Naive thymus-derived CD4-positive, alpha-beta T cell (primary cell): ENCODE measurements at regions of chrX and their contacts with region 1.

Region 1: DNA sequence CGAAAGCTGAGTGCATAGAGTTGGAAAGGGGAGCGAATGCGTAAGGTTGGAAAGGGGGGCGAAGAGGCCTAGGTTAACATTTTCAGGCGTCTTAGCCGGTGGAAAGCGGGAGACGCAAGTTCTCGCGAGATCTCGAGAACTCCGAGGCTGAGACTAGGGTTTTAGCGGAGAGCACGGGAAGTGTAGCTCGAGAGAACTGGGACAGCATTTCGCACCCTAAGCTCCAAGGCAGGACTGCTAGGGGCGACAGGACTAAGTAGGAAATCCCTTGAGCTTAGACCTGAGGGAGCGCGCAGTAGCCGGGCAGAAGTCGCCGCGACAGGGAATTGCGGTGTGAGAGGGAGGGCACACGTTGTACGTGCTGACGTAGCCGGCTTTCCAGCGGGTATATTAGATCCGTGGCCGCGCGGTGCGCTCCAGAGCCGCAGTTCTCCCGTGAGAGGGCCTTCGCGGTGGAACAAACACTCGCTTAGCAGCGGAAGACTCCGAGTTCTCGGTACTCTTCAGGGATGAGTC is at the start of gene DDX3X:
- DNase-seq: peak; percentile 69 to 95 (median 91)
- ATAC-seq: peak; percentile 73
- H3K4me3 ChIP-seq: peak within 1 kb of the TSS; percentile 91
- H3K4me3 Mint-ChIP-seq: peak within 1 kb of the TSS; percentile 92 to 99 (median 96)
- H3K27ac ChIP-seq: peak within 1 kb of the TSS; percentile 100
- H3K27ac Mint-ChIP-seq: peak within 1 kb of the TSS; percentile 99 to 100 (median 100)
- H3K4me1 ChIP-seq: peaks cover 8 to 16% of the 10 kb centered on the region in 2 donors
- H3K4me1 Mint-ChIP-seq: peaks cover 12 to 65% (median 29%) of the 10 kb centered on the region in 7 donors
- H3K27me3 ChIP-seq: no peaks in the 10 kb centered on the region
- H3K27me3 Mint-ChIP-seq: peaks cover 0 to 6% (median 0%) of the 10 kb centered on the region in 5 donors
- total RNA-seq, gene DDX3X: 281 to 790 (median 296) TPM

Region 2: GRCh38 chrX:40097497-40098263 is 1236.1 kb before region 1 on chrX and contains the start of gene BCOR:
- CTCF ChIA-PET with region 1: no interaction called
- POLR2A ChIA-PET with region 1: no interaction called
- intact Hi-C with region 1: loop called in 1 of 2 experiments (anchors 5 kb)
- DNase-seq: peak; percentile 54 to 78 (median 72)
- ATAC-seq: peak; percentile 58
- H3K4me3 ChIP-seq: peak within 1 kb of the TSS; percentile 74
- H3K4me3 Mint-ChIP-seq: peak within 1 kb of the TSS; percentile 88 to 98 (median 92)
- H3K27ac ChIP-seq: peak within 1 kb of the TSS; percentile 80
- H3K27ac Mint-ChIP-seq: peak within 1 kb of the TSS; percentile 82 to 93 (median 89)
- H3K4me1 ChIP-seq: peaks cover 5 to 12% of the 10 kb centered on the region in 2 donors
- H3K4me1 Mint-ChIP-seq: peaks cover 12 to 34% (median 25%) of the 10 kb centered on the region in 7 donors
- H3K27me3 ChIP-seq: no peaks in the 10 kb centered on the region
- H3K27me3 Mint-ChIP-seq: no peaks in the 10 kb centered on the region
- total RNA-seq, gene BCOR: 23.3 to 55.2 (median 43.3) TPM

Region 3: GRCh38 chrX:40647307-40648197 is 686.2 kb before region 1 on chrX and contains the start of gene CXorf38:
- CTCF ChIA-PET with region 1: no interaction called
- POLR2A ChIA-PET with region 1: interaction called, 5 read pairs
- intact Hi-C with region 1: loop called (anchors 2 to 5 kb)
- DNase-seq: peak; percentile 86 to 99 (median 95)
- ATAC-seq: peak; percentile 85
- H3K4me3 ChIP-seq: peak within 1 kb of the TSS; percentile 73
- H3K4me3 Mint-ChIP-seq: peak within 1 kb of the TSS; percentile 89 to 96 (median 94)
- H3K27ac ChIP-seq: peak within 1 kb of the TSS; percentile 89
- H3K27ac Mint-ChIP-seq: peak within 1 kb of the TSS; percentile 88 to 99 (median 95)
- H3K4me1 ChIP-seq: peaks cover 3 to 19% of the 10 kb centered on the region in 2 donors
- H3K4me1 Mint-ChIP-seq: peaks cover 16 to 51% (median 31%) of the 10 kb centered on the region in 7 donors
- H3K27me3 ChIP-seq: no peaks in the 10 kb centered on the region
- H3K27me3 Mint-ChIP-seq: no peaks in the 10 kb centered on the region
- total RNA-seq, gene CXorf38: 15.0 to 25.4 (median 22.2) TPM

Region 4: DNA sequence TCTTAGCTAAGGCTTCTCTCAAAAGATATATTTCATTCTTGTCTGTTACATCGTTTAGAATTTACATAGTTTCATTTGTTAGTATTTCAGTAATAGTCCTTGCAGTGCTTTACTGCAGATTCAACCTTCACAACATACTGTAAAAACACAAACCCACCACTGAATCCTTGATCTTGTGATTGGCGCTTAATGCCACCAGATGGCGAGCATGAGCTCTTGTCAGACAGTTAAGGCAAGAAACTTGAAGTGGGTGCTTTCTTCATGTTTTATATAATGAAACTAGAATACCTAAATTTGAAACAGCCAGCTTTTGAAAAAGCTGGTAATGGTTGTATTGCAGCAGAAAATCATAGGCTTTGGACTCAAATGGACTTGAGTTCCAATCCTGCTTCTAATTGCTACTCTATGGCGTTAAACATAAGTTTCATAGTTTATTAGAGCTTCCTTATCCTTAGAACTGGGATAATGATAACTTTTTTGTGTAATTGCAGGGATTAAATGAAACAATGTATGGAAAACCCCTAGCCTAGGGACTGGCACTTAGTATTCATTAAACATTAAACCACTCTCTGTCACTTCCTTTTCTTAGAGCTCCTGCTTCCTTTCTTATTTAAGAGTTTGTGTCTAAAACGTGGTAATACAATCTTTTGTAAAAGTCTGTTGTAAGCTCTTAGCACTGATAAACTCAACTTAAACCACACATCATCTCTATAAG is 153.5 kb before region 1 on chrX:
- CTCF ChIA-PET with region 1: interaction called, 3 read pairs
- POLR2A ChIA-PET with region 1: no interaction called
- intact Hi-C with region 1: loop called in 1 of 2 experiments (anchors 5 kb)
- DNase-seq: peak in 8 of 9 donors; percentile 22 to 64 (median 46)
- ATAC-seq: peak; percentile 80
- H3K4me3 ChIP-seq: no peak overlapping the region
- H3K4me3 Mint-ChIP-seq: peak overlapping the region in 3 of 10 donors; percentile 19 to 58 (median 42)
- H3K27ac ChIP-seq: no peak overlapping the region
- H3K27ac Mint-ChIP-seq: peak overlapping the region in 7 of 9 donors; percentile 42 to 62 (median 56)
- H3K4me1 ChIP-seq: peaks cover 0 to 10% of the 10 kb centered on the region in 2 donors
- H3K4me1 Mint-ChIP-seq: peaks cover 23 to 63% (median 51%) of the 10 kb centered on the region in 7 donors
- H3K27me3 ChIP-seq: no peaks in the 10 kb centered on the region
- H3K27me3 Mint-ChIP-seq: no peaks in the 10 kb centered on the region

Region 5: DNA sequence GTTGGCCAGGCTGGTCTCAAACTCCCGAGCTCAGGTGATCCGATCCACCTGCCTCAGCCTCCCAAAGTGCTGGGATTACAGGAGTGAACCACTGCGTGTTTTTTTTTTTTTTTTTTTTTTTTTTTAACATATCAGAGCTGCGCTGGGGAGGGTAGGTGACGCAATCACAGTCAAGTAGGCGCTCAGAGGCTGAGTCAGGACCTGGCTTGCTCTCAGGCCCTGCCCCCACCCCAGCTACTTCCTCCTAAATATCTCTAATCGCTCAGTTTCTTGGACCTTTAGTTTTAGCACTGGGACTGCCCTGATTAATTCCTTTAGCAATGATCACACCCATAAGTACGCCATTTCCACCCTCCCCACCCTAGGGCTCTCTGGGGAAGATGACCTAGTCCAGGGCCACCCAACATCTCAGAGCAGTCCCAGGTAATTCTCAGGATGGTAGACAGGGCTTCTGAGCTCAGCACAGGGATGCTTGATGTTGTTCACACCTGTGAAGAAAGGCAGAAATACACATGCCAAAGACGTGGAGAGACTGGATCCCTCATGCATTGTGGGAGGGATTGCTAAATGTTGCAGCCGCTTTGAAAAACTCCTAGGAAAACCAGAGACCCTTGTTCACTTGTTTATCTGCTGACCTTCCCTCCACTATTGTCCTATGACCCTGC is 50.4 kb after region 1 on chrX:
- CTCF ChIA-PET with region 1: no interaction called
- POLR2A ChIA-PET with region 1: interaction called, 16 read pairs
- intact Hi-C with region 1: loop called (anchors 1 to 2 kb)
- DNase-seq: peak; percentile 4 to 58 (median 26)
- ATAC-seq: peak; percentile 79
- H3K4me3 ChIP-seq: no peak overlapping the region
- H3K4me3 Mint-ChIP-seq: peak overlapping the region in 5 of 10 donors; percentile 18 to 87 (median 79)
- H3K27ac ChIP-seq: no peak overlapping the region
- H3K27ac Mint-ChIP-seq: peak overlapping the region in 5 of 9 donors; percentile 36 to 98 (median 87)
- H3K4me1 ChIP-seq: peaks cover 0 to 5% of the 10 kb centered on the region in 2 donors
- H3K4me1 Mint-ChIP-seq: peaks cover 0 to 21% (median 15%) of the 10 kb centered on the region in 7 donors
- H3K27me3 ChIP-seq: no peaks in the 10 kb centered on the region
- H3K27me3 Mint-ChIP-seq: no peaks in the 10 kb centered on the region

Region 6: GRCh38 chrX:41561045-41561444 is 227.2 kb after region 1 on chrX:
- CTCF ChIA-PET with region 1: no interaction called
- POLR2A ChIA-PET with region 1: no interaction called
- intact Hi-C with region 1: loop called in 1 of 2 experiments (anchors 1 kb)
- DNase-seq: peak in 1 of 9 donors; percentile 24
- ATAC-seq: peak; percentile 82
- H3K4me3 ChIP-seq: no peak overlapping the region
- H3K4me3 Mint-ChIP-seq: peak overlapping the region in 1 of 10 donors; percentile 50
- H3K27ac ChIP-seq: no peak overlapping the region
- H3K27ac Mint-ChIP-seq: peak overlapping the region in 1 of 9 donors; percentile 81
- H3K4me1 ChIP-seq: peaks cover 0 to 25% of the 10 kb centered on the region in 2 donors
- H3K4me1 Mint-ChIP-seq: peaks cover 7 to 47% (median 29%) of the 10 kb centered on the region in 7 donors
- H3K27me3 ChIP-seq: no peaks in the 10 kb centered on the region
- H3K27me3 Mint-ChIP-seq: no peaks in the 10 kb centered on the region